Mammary epithelial cell (primary cell): ENCODE measurements at regions of chr17 and their contacts with region 1.

Region 1: GRCh38 chr17:50478391-50479381 is at the start of gene RSAD1:
- DNase-seq: peak; percentile 88
- H3K4me3 ChIP-seq: peak within 1 kb of the TSS; percentile 77 to 98 (median 98)
- H3K27ac ChIP-seq: peak within 1 kb of the TSS; percentile 64
- H3K4me1 ChIP-seq: peaks cover 29% of the 10 kb centered on the region
- H3K27me3 ChIP-seq: no peaks in the 10 kb centered on the region
- CTCF ChIP-seq: peak; percentile 46 to 74
- total RNA-seq, gene RSAD1: 17.2 to 29.9 TPM

Region 2: GRCh38 chr17:50361561-50362480 is 116.9 kb before region 1 on chr17:
- CTCF ChIA-PET with region 1: interaction called, 4 read pairs
- dilution Hi-C with region 1: no loop called
- in situ Hi-C with region 1: no loop called
- intact Hi-C with region 1: loop called (anchors 1 kb)
- DNase-seq: peak; percentile 46
- H3K4me3 ChIP-seq: no peak overlapping the region
- H3K27ac ChIP-seq: no peak overlapping the region
- H3K4me1 ChIP-seq: no peaks in the 10 kb centered on the region
- H3K27me3 ChIP-seq: no peaks in the 10 kb centered on the region
- CTCF ChIP-seq: peak; percentile 81

Region 3: GRCh38 chr17:50501054-50501453 is 22.4 kb after region 1 on chr17:
- CTCF ChIA-PET with region 1: interaction called, 8 read pairs
- dilution Hi-C with region 1: no loop called
- in situ Hi-C with region 1: no loop called
- intact Hi-C with region 1: loop called (anchors 1 kb)
- DNase-seq: no peak
- H3K4me3 ChIP-seq: no peak overlapping the region
- H3K27ac ChIP-seq: no peak overlapping the region
- H3K4me1 ChIP-seq: peaks cover 19% of the 10 kb centered on the region
- H3K27me3 ChIP-seq: no peaks in the 10 kb centered on the region
- CTCF ChIP-seq: peak; percentile 26 to 54

Region 4: DNA sequence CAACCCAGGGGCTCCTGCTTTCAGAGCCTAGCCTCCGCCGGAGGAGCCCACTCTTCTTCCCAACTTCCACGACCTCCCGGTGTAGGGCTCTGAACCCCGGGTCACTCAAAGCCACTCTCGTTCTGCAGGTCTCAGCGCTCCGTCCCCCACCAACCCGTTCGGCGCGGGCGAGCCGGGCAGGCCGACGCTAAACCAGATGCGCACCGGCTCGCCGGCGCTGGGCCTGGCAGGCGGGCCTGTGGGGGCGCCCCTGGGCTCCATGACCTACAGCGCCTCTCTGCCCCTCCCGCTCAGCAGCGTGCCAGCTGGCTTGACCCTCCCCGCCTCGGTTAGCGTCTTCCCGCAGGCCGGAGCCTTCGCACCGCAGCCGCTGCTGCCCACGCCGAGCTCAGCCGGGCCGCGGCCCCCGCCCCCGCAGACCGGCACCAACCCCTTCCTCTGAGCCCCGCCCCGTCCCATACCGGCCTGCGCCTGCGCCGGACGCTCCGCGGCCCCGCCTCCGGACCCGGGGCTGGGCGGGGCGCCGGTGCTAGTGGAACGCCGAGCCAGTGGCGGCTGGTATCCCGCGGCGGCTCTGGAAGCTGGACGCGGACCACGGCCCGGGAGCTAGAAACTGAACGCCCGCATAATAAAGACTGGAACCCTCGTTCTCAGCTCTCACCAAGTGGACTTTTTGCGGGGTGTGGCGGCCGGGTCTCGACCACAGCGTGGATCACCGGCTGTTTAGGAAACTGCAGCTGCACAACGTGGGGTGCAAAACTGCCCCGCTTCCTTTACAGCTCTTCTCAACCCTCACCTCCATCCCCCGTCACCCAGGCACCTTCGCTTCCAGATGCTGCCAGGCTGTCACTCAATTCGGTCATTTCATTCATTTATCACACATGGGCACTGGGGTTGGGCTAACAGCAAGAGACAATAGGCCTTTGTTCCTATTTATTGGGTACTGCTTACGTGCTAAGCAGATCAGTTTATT is 63.3 kb after region 1 on chr17:
- CTCF ChIA-PET with region 1: no interaction called
- dilution Hi-C with region 1: no loop called
- in situ Hi-C with region 1: no loop called
- intact Hi-C with region 1: loop called (anchors 1 kb)
- DNase-seq: peak; percentile 82
- H3K4me3 ChIP-seq: peak overlapping the region in 2 of 3 experiments; percentile 16 to 28
- H3K27ac ChIP-seq: no peak overlapping the region
- H3K4me1 ChIP-seq: peaks cover 60% of the 10 kb centered on the region
- H3K27me3 ChIP-seq: no peaks in the 10 kb centered on the region
- CTCF ChIP-seq: peak in 1 of 2 donors; percentile 12

Region 5: GRCh38 chr17:50681263-50682210 is 202.9 kb after region 1 on chr17:
- CTCF ChIA-PET with region 1: no interaction called
- dilution Hi-C with region 1: no loop called
- in situ Hi-C with region 1: no loop called
- intact Hi-C with region 1: loop called (anchors 1 kb)
- DNase-seq: no peak
- H3K4me3 ChIP-seq: no peak overlapping the region
- H3K27ac ChIP-seq: no peak overlapping the region
- H3K4me1 ChIP-seq: peaks cover 6% of the 10 kb centered on the region
- H3K27me3 ChIP-seq: no peaks in the 10 kb centered on the region
- CTCF ChIP-seq: peak; percentile 20 to 59